Activated T-helper 2 cell treated with anti-CD3 and anti-CD28 coated beads, Interferon-gamma antibody, Interleukin-2, Interleukin-4, amounts not matched to agents 10 μg/mL and 5 μg/mL and 100 μg/mL, durations not matched to agents 14 hours and 24 hours and 36 hours (primary cell): ENCODE measurements at regions of chr4 and their contacts with region 1.

Region 1: GRCh38 chr4:78864405-78865024 is 74.7 kb downstream of the PAQR3 start:
- DNase-seq: no peak
- H3K4me3 Mint-ChIP-seq: no peak overlapping the region
- H3K27ac Mint-ChIP-seq: no peak overlapping the region
- H3K4me1 Mint-ChIP-seq: peaks cover 2% of the 10 kb centered on the region
- H3K27me3 Mint-ChIP-seq: no peaks in the 10 kb centered on the region

Region 2: DNA sequence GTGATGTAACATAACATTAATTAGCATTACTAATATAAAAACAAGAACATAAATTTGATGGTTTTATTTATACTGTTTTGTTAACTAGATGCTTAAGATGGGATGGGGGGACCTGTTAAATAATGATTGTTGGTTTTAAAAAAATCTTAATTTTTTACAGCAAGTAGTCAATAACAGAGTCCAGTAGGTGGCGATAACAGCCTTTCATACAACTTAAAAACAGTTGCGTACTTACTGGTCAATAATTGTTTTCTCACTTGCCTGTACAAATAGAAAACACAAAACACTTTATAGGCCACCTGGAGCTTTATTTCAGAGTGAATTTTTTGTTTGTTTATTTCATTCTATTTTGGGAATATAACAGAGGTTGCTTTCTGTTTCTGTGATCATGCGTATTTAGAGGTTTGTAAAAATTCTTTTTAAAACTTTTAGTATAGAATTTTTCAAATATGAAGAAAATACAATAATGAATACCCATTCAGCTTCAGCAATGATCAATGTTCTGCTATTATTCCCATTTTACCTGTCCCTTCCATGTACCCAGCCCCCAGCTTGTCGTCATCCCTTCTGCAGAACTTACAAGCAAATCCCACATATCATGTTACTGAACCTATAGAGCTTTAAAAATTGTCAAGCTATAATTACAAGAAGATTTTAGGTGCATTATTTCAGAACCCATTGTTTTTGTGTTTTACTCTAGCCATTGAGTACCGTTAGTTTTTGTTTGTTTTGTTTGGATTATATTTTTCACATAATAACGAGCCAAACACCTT is 904.8 kb before region 1 on chr4:
- intact Hi-C with region 1: loop called (anchors 5 kb)
- DNase-seq: no peak
- H3K4me3 Mint-ChIP-seq: no peak overlapping the region
- H3K27ac Mint-ChIP-seq: no peak overlapping the region
- H3K4me1 Mint-ChIP-seq: peaks cover 3% of the 10 kb centered on the region
- H3K27me3 Mint-ChIP-seq: peaks cover 5% of the 10 kb centered on the region

Region 3: GRCh38 chr4:78592104-78592783 is 272.3 kb before region 1 on chr4:
- intact Hi-C with region 1: loop called (anchors 5 kb)
- DNase-seq: no peak
- H3K4me3 Mint-ChIP-seq: no peak overlapping the region
- H3K27ac Mint-ChIP-seq: no peak overlapping the region
- H3K4me1 Mint-ChIP-seq: no peaks in the 10 kb centered on the region
- H3K27me3 Mint-ChIP-seq: peaks cover 16% of the 10 kb centered on the region

Region 4: DNA sequence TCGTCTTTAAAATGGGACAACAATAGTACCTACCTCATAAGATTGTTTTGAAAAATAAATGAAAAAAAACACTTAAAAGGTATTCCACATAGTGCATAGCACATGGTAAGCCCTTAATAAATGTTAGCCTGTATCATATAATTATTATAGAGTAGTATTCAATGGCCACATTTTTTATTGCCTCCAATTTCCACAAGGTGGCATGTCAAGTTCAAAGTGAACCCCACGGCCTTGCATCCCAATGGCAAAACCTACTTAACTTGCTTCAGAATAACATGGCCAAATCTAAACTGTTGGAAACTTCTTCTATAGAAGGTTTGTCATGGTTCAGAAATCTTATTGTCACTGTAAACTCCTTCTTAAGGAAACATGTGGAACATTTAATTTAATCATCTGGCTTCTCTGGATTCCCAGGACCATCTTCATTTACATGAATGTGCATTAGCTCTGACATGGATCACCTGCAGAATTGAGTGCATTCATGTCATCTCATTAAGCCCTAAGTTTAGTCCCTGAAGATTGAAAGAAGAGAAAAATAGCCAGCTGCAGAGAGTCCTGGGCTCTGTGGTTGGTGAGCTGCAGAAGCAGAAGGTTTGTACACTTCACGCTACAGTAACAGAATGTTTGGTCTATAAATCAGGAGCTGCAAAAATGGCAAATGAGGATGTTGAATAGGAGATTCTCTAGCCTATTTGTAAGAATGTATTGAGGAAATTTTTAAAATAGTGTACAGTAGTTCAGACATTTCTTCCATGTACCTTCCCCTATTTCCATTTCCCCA is 251.9 kb before region 1 on chr4:
- intact Hi-C with region 1: loop called (anchors 1 kb)
- DNase-seq: no peak
- H3K4me3 Mint-ChIP-seq: no peak overlapping the region
- H3K27ac Mint-ChIP-seq: no peak overlapping the region
- H3K4me1 Mint-ChIP-seq: peaks cover 45% of the 10 kb centered on the region
- H3K27me3 Mint-ChIP-seq: peaks cover 8% of the 10 kb centered on the region